Naive thymus-derived CD4-positive, alpha-beta T cell (primary cell): ENCODE measurements at regions of chr7 and their contacts with region 1.

Region 1: GRCh38 chr7:98400542-98401340 is at the start of gene BAIAP2L1:
- DNase-seq: peak; percentile 54 to 82 (median 70)
- ATAC-seq: peak; percentile 96
- H3K4me3 ChIP-seq: peak within 1 kb of the TSS; percentile 41
- H3K4me3 Mint-ChIP-seq: peak within 1 kb of the TSS; percentile 66 to 84 (median 74)
- H3K27ac ChIP-seq: peak within 1 kb of the TSS; percentile 39
- H3K27ac Mint-ChIP-seq: peak within 1 kb of the TSS in 5 of 9 donors; percentile 25 to 75 (median 59)
- H3K4me1 ChIP-seq: peaks cover 0 to 5% of the 10 kb centered on the region in 2 donors
- H3K4me1 Mint-ChIP-seq: peaks cover 0 to 14% (median 6%) of the 10 kb centered on the region in 7 donors
- H3K27me3 ChIP-seq: no peaks in the 10 kb centered on the region
- H3K27me3 Mint-ChIP-seq: peaks cover 0 to 23% (median 9%) of the 10 kb centered on the region in 5 donors
- total RNA-seq, gene BAIAP2L1: 0.32 to 2.0 (median 0.56) TPM

Region 2: DNA sequence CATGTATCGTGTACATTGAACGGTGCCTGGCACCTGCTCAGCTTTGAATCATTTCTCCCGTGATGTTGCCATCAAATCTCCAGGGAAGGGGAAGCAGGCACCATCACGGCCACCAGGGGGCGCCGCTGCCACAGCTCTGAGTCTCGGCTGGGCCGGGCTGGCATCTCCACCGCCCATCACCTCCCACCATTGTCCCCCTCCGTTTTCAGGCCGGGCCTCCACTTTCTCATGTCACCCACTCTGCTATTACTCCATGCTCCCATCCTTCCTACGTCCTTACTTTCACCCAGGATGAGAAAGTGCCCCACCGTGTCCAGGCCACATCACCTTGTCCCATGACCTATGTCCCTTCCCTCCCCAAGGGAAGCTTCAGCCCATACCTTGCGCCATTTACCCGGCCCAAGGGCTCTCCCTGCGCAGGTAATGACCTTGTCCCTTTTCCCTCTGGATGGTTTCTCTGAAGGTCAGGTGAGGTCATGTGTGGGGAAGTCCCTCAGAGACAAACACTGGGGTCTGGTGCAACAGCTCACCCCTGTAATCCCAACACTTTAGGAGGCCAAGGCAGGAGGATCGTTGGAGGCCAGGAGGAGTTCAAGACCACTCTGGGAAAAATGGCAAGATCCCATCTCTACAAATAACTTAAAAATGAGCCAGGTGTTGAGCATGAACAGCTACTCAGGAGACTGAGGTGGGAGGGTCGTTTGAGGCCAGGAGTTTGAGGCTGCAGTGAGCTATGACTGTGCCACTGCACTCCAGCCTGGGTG is 379.0 kb before region 1 on chr7:
- CTCF ChIA-PET with region 1: interaction called, 4 read pairs
- POLR2A ChIA-PET with region 1: no interaction called
- intact Hi-C with region 1: loop called in 1 of 2 experiments (anchors 1 kb)
- DNase-seq: peak; percentile 44 to 84 (median 72)
- ATAC-seq: peak; percentile 88
- H3K4me3 ChIP-seq: no peak overlapping the region
- H3K4me3 Mint-ChIP-seq: no peak overlapping the region
- H3K27ac ChIP-seq: no peak overlapping the region
- H3K27ac Mint-ChIP-seq: peak overlapping the region in 1 of 9 donors; percentile 27
- H3K4me1 ChIP-seq: no peaks in the 10 kb centered on the region
- H3K4me1 Mint-ChIP-seq: peaks cover 0 to 5% (median 5%) of the 10 kb centered on the region in 7 donors
- H3K27me3 ChIP-seq: no peaks in the 10 kb centered on the region
- H3K27me3 Mint-ChIP-seq: peaks cover 0 to 10% (median 7%) of the 10 kb centered on the region in 5 donors

Region 3: DNA sequence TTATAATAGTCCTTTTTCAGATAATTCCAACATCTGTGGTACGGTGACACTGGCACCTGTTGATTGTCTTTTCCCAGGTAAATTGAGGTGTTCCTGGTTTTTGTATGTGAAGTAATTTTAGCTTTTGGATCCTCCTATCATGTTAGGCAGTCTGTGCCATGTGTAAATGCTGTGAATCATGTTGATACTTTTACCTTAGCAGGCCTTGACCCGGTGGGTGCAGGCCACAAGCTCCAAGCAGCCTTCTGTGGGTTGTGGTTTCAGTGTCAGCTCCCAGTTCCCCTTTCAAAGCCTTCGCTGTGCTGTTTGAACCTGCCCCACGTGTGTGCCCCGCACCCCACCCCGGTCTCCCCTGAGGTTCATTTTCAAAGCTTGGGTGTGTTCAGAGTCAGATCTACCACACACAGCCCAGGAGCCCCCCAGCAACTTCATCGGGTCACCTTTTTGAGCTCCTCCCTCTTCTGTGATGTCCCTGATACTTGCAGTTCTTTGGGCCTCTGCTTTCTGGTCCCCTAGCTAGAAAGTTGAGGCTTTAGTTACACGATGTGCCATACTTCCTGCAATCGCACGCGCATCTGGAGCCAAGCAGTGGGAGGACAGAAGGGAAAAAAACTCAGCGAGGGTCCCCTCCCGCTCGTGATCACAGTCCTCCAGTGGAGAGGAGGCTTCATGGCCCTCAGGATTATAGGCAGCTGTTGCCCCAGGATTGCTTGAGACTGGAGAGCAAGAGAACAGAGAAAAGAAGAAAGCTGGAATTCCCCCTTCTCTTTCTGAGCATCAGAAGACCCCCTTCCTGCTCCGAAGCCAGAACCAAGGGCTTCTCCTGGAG is 198.2 kb before region 1 on chr7:
- CTCF ChIA-PET with region 1: no interaction called
- POLR2A ChIA-PET with region 1: no interaction called
- intact Hi-C with region 1: loop called in 1 of 2 experiments (anchors 2 kb)
- DNase-seq: peak in 8 of 9 donors; percentile 60 to 71 (median 64)
- ATAC-seq: peak; percentile 93
- H3K4me3 ChIP-seq: peak overlapping the region; percentile 24
- H3K4me3 Mint-ChIP-seq: peak overlapping the region; percentile 81 to 91 (median 86)
- H3K27ac ChIP-seq: peak overlapping the region; percentile 60
- H3K27ac Mint-ChIP-seq: peak overlapping the region; percentile 55 to 96 (median 80)
- H3K4me1 ChIP-seq: peaks cover 21 to 49% of the 10 kb centered on the region in 2 donors
- H3K4me1 Mint-ChIP-seq: peaks cover 35 to 76% (median 65%) of the 10 kb centered on the region in 7 donors
- H3K27me3 ChIP-seq: no peaks in the 10 kb centered on the region
- H3K27me3 Mint-ChIP-seq: no peaks in the 10 kb centered on the region

Region 4: GRCh38 chr7:98266840-98267239 is 133.9 kb before region 1 on chr7:
- CTCF ChIA-PET with region 1: no interaction called
- POLR2A ChIA-PET with region 1: no interaction called
- intact Hi-C with region 1: loop called in 1 of 2 experiments (anchors 2 kb)
- DNase-seq: no peak
- ATAC-seq: peak; percentile 66
- H3K4me3 ChIP-seq: no peak overlapping the region
- H3K4me3 Mint-ChIP-seq: no peak overlapping the region
- H3K27ac ChIP-seq: no peak overlapping the region
- H3K27ac Mint-ChIP-seq: peak overlapping the region in 4 of 9 donors; percentile 20 to 43 (median 31)
- H3K4me1 ChIP-seq: no peaks in the 10 kb centered on the region
- H3K4me1 Mint-ChIP-seq: peaks cover 6 to 17% (median 15%) of the 10 kb centered on the region in 7 donors
- H3K27me3 ChIP-seq: no peaks in the 10 kb centered on the region
- H3K27me3 Mint-ChIP-seq: no peaks in the 10 kb centered on the region

Region 5: GRCh38 chr7:98375664-98376063 is 25.1 kb before region 1 on chr7:
- CTCF ChIA-PET with region 1: no interaction called
- POLR2A ChIA-PET with region 1: no interaction called
- intact Hi-C with region 1: no loop called
- DNase-seq: no peak
- ATAC-seq: no peak
- H3K4me3 ChIP-seq: no peak overlapping the region
- H3K4me3 Mint-ChIP-seq: no peak overlapping the region
- H3K27ac ChIP-seq: no peak overlapping the region
- H3K27ac Mint-ChIP-seq: no peak overlapping the region
- H3K4me1 ChIP-seq: no peaks in the 10 kb centered on the region
- H3K4me1 Mint-ChIP-seq: no peaks in the 10 kb centered on the region
- H3K27me3 ChIP-seq: no peaks in the 10 kb centered on the region
- H3K27me3 Mint-ChIP-seq: no peaks in the 10 kb centered on the region

Region 6: DNA sequence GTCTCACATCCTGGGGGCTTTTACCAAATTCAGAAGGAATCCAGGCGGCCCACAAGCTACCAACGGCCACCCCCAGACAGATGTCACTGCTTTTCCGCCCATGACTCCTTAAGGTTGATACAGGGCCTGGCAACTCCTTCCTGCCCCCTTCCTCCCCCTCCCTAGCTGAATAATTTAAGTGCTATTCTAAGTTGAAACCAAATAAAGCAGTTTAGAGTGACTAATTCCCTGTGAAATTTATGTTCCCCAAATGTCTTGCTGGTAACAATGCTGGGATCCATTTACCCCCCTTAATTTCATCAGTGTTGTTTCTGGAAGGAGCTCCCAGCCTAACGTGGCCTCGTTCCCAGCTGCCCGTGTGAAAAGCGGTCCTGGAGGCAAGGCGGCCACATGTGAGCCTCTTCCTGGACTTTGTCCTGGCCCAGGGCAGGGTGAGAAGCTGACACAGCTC is 359.5 kb after region 1 on chr7:
- CTCF ChIA-PET with region 1: no interaction called
- POLR2A ChIA-PET with region 1: no interaction called
- intact Hi-C with region 1: no loop called
- DNase-seq: no peak
- ATAC-seq: no peak
- H3K4me3 ChIP-seq: no peak overlapping the region
- H3K4me3 Mint-ChIP-seq: no peak overlapping the region
- H3K27ac ChIP-seq: no peak overlapping the region
- H3K27ac Mint-ChIP-seq: no peak overlapping the region
- H3K4me1 ChIP-seq: no peaks in the 10 kb centered on the region
- H3K4me1 Mint-ChIP-seq: peaks cover 0 to 2% (median 0%) of the 10 kb centered on the region in 7 donors
- H3K27me3 ChIP-seq: no peaks in the 10 kb centered on the region
- H3K27me3 Mint-ChIP-seq: peaks cover 0 to 42% (median 28%) of the 10 kb centered on the region in 5 donors